Heart left ventricle (tissue), 16 donors: ENCODE measurements at regions of chr11 and their contacts with region 1.

Region 1: DNA sequence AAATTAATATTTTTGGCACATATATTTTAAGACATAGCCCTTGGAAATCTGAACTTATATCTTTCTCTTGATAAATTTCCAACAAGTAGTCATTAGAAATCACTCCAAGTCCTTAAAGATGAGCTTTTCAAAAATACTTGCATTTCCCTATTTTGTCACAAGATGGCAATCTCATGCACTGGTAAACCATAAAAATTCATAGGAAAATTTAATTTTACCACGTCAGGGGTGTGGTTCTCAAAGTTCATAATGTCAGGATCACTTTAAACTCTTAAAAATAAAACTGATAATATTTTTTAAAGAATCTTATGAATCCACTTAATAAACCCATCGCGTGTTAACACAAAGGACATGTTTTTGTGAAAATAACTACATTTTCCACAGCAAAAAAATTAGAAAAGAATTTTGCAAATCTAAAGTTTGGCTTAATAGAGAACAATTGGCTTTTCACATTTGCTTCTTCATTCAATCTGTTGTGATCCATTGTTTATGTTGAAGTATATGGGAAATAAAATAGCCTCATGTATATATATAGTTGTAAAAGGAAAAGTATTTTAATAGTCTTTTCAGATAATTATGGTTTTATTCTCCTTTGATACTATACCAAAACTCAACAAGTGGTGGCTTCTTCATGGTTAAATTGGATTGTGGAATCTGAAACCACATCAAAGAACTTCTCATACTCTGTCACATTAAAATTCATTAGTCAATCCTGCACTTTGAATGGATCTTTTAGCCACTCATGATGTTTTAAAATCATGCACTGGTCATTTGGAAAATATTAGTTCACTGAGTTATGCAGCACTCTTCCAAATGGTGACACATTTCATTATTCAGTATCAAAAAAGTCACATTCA is 169.1 kb downstream of the CADM1 start:
- DNase-seq: no peak
- ATAC-seq: no peak
- H3K4me3 ChIP-seq: no peak overlapping the region
- H3K27ac ChIP-seq: no peak overlapping the region
- H3K4me1 ChIP-seq: peaks cover 0 to 8% (median 0%) of the 10 kb centered on the region in 12 donors
- H3K27me3 ChIP-seq: no peaks in the 10 kb centered on the region
- CTCF ChIP-seq: peak; percentile 50 to 85 (median 73)
- POLR2A ChIP-seq: no peak

Region 2: GRCh38 chr11:115364896-115365295 is 29.7 kb after region 1 on chr11:
- intact Hi-C with region 1: no loop called
- DNase-seq: no peak
- ATAC-seq: peak in 3 of 4 donors; percentile 46 to 68 (median 56)
- H3K4me3 ChIP-seq: no peak overlapping the region
- H3K27ac ChIP-seq: peak overlapping the region in 3 of 12 donors; percentile 1 to 26 (median 15)
- H3K4me1 ChIP-seq: peaks cover 0 to 46% (median 4%) of the 10 kb centered on the region in 12 donors
- H3K27me3 ChIP-seq: no peaks in the 10 kb centered on the region
- CTCF ChIP-seq: no peak
- POLR2A ChIP-seq: no peak

Region 3: GRCh38 chr11:115496917-115497702 is 161.9 kb after region 1 on chr11:
- intact Hi-C with region 1: loop called in 7 of 10 experiments (anchors 2 to 10 kb)
- DNase-seq: no peak
- ATAC-seq: no peak
- H3K4me3 ChIP-seq: no peak overlapping the region
- H3K27ac ChIP-seq: no peak overlapping the region
- H3K4me1 ChIP-seq: peaks cover 0 to 18% (median 2%) of the 10 kb centered on the region in 12 donors
- H3K27me3 ChIP-seq: peaks cover 0 to 44% (median 6%) of the 10 kb centered on the region in 9 donors
- CTCF ChIP-seq: no peak
- POLR2A ChIP-seq: no peak

Region 4: DNA sequence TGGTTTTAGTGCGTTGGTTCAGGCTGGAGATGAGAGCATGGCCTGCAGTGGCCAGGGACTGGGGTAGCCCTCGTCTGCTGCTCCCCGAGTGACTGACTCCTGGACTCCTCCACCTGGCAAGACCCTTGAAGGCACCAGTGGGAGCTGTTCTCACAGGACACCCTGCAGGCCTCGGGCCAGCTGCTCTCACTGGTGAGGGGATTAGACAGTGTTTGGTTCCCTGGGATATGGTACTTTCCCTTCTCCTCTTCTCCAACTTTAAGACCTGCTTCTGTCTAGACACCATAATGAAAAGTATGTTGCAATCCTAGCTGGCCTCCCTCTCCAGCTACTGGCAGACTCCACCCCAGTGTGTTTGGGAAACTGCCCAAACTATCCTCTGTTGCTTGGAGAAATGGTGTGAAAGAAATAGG is 337.8 kb after region 1 on chr11:
- intact Hi-C with region 1: loop called in 6 of 10 experiments (anchors 5 to 10 kb)
- DNase-seq: peak in 4 of 5 donors; percentile 27 to 58 (median 48)
- ATAC-seq: peak; percentile 54 to 94 (median 81)
- H3K4me3 ChIP-seq: no peak overlapping the region
- H3K27ac ChIP-seq: peak overlapping the region in 2 of 12 donors; percentile 23 to 41
- H3K4me1 ChIP-seq: peaks cover 0 to 15% (median 8%) of the 10 kb centered on the region in 12 donors
- H3K27me3 ChIP-seq: no peaks in the 10 kb centered on the region
- CTCF ChIP-seq: no peak
- POLR2A ChIP-seq: no peak

Region 5: GRCh38 chr11:115678942-115679341 is 343.8 kb after region 1 on chr11:
- intact Hi-C with region 1: loop called in 6 of 10 experiments (anchors 5 to 10 kb)
- DNase-seq: peak in 2 of 5 donors; percentile 47 to 56
- ATAC-seq: peak; percentile 68 to 87 (median 83)
- H3K4me3 ChIP-seq: no peak overlapping the region
- H3K27ac ChIP-seq: no peak overlapping the region
- H3K4me1 ChIP-seq: peaks cover 0 to 7% (median 0%) of the 10 kb centered on the region in 12 donors
- H3K27me3 ChIP-seq: no peaks in the 10 kb centered on the region
- CTCF ChIP-seq: peak in 7 of 12 donors; percentile 22 to 50 (median 37)
- POLR2A ChIP-seq: no peak

Region 6: DNA sequence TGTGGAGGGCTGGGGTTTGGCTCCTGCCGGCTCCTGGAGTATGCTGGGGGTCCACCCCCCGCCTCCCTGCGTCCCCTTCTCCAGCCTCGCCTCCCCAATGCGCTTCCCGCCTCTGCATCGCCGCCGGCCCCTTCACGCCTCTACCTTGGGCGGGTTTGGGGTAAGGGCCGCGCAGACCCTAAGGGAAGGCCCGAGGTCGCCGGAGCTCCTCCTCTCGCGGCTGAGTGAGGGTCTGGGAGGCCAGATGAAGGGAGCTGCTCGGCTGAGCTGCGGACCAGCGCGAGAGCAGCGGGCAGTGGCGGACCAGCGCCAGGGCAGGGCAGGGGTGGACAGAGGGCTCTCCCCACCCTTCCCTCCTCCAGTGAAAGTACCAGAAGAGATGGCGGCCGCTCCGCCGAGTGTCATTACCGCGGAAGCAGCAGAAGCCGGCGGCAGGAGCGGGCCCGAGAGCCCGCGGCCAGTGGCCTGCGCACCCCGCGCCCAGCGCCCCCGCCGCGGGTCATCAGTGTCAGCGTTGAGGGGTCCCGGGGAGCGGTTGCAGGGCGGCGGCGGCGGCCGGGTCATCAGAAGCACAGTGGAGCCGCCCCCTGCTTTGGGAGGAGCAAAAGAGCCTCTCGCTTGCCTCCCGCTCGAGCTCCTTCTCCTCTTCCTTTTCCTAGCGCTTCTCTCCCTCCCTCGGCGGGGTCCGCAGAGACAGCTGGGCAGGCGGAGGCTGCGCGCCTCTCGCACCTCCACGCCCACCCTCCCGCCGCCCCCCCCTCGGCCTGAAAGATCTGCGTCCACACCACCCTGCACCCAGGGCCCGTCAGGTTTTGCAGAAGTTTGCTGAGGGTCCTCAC is 424.7 kb after region 1 on chr11:
- intact Hi-C with region 1: loop called in 1 of 10 experiments (anchors 10 kb)
- DNase-seq: peak; percentile 45 to 71 (median 54)
- ATAC-seq: peak; percentile 30 to 82 (median 70)
- H3K4me3 ChIP-seq: peak overlapping the region; percentile 50 to 93 (median 82)
- H3K27ac ChIP-seq: peak overlapping the region in 9 of 12 donors; percentile 38 to 83 (median 57)
- H3K4me1 ChIP-seq: peaks cover 0 to 14% (median 6%) of the 10 kb centered on the region in 12 donors
- H3K27me3 ChIP-seq: peaks cover 0 to 11% (median 0%) of the 10 kb centered on the region in 9 donors
- CTCF ChIP-seq: no peak
- POLR2A ChIP-seq: no peak

Region 7: DNA sequence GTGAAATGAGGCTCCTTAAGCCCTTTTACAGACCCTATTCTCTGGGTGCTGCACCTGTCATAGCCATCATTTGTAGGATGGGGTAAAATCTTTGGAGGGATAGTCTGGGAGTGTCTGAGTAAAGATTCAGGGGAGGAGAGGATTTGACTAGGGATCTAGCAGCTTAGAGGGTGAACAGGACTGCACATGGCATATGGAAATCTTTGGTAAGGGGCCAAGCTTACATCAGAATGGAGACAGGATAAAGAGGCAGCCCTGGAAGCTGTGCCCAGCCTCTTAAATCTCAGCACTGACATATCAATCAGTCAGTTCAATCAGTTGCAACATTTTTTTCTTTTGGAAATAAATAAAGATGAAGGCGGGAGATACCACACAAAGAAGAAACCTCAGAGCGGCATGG is 470.9 kb after region 1 on chr11:
- intact Hi-C with region 1: no loop called
- DNase-seq: no peak
- ATAC-seq: no peak
- H3K4me3 ChIP-seq: no peak overlapping the region
- H3K27ac ChIP-seq: no peak overlapping the region
- H3K4me1 ChIP-seq: no peaks in the 10 kb centered on the region
- H3K27me3 ChIP-seq: no peaks in the 10 kb centered on the region
- CTCF ChIP-seq: no peak
- POLR2A ChIP-seq: no peak